ENCODE measurements at regions of chr15 and their contacts with region 1.

Region 1: GRCh38 chr15:74956648-74957300 is at the start of gene RPP25:
- DNase-seq: peak; percentile 93
- H3K4me3 Mint-ChIP-seq: peak within 1 kb of the TSS; percentile 74
- H3K27ac Mint-ChIP-seq: no peak within 1 kb of the TSS
- H3K4me1 Mint-ChIP-seq: peaks cover 32% of the 10 kb centered on the region
- H3K27me3 Mint-ChIP-seq: peaks cover 36% of the 10 kb centered on the region
- total RNA-seq, gene RPP25: 13.1 and 13.9 TPM in 2 replicates

Region 2: GRCh38 chr15:74787251-74788041 is 169.3 kb before region 1 on chr15:
- intact Hi-C with region 1: loop called (anchors 5 kb)
- DNase-seq: peak; percentile 97
- H3K4me3 Mint-ChIP-seq: peak overlapping the region; percentile 96
- H3K27ac Mint-ChIP-seq: peak overlapping the region; percentile 99
- H3K4me1 Mint-ChIP-seq: peaks cover 68% of the 10 kb centered on the region
- H3K27me3 Mint-ChIP-seq: no peaks in the 10 kb centered on the region

Region 3: GRCh38 chr15:74937596-74938296 is 19.0 kb before region 1 on chr15 and contains the start of gene COX5A:
- intact Hi-C with region 1: loop called (anchors 2 kb)
- DNase-seq: peak; percentile 97
- H3K4me3 Mint-ChIP-seq: peak within 1 kb of the TSS; percentile 92
- H3K27ac Mint-ChIP-seq: peak within 1 kb of the TSS; percentile 88
- H3K4me1 Mint-ChIP-seq: peaks cover 23% of the 10 kb centered on the region
- H3K27me3 Mint-ChIP-seq: no peaks in the 10 kb centered on the region
- total RNA-seq, gene COX5A: 314 and 317 TPM in 2 replicates

Region 4: DNA sequence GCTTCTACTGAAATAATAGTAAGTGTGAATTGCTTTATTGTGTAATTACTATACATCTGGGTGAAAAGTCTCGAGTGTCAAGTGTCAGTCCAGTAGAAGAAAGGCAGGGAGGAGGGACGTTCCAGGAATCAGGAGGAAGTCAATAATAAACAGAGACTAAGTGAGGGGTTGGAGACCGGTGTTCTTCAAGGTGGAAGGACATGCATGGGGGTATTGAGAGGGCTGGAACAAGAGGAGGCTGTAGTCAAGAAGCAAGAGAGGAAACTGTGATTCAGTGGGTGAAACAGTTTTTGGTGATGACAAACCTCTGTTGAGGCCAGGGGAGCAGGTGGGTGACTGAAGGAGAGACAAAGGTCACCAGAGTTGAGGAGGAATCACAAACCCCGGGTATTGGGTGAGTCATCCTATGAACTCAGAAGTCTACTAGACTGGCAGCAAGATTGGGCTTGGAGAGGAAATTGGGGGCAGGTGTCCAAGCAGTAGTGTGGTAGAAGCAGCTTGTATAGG is 27.0 kb after region 1 on chr15:
- intact Hi-C with region 1: loop called (anchors 1 kb)
- DNase-seq: peak; percentile 67
- H3K4me3 Mint-ChIP-seq: peak overlapping the region; percentile 5
- H3K27ac Mint-ChIP-seq: peak overlapping the region; percentile 67
- H3K4me1 Mint-ChIP-seq: peaks cover 7% of the 10 kb centered on the region
- H3K27me3 Mint-ChIP-seq: peaks cover 10% of the 10 kb centered on the region

Region 5: DNA sequence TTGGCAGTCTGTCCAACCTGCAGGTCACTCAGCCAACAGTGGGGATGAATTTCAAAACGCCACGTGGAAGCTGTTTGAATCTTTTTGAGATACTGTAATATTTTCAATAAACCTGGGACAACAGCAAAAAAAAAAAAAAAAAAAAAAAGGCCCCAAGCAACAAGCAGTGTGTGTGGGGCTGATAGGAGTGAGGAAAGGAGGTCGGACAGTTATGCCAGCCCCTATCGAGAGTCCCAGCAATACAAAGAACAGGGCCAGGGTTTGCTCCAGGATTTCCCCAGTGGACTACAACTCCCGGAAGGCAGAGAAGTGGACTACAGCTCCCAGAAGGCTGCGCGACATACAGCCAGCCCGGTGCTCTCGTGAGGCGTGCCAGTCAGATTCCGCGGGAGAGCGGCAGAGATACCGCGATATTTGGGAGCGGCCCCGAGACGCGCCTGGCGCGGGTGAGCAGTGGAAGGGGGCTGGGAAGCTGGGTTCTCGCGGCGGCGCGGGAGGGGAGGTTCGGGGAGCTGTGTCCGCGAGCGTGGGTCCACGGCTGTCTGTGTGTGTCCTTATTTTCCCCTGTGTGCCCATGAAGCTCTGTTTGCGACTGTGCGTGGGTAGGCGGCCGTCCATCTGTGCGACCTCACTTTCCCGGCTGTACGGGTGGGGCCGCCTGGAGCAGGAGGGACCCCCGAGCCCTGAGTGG is 66.6 kb after region 1 on chr15 and contains the start of gene PPCDC:
- intact Hi-C with region 1: loop called (anchors 1 kb)
- DNase-seq: peak; percentile 99
- H3K4me3 Mint-ChIP-seq: peak within 1 kb of the TSS; percentile 89
- H3K27ac Mint-ChIP-seq: peak within 1 kb of the TSS; percentile 93
- H3K4me1 Mint-ChIP-seq: peaks cover 18% of the 10 kb centered on the region
- H3K27me3 Mint-ChIP-seq: no peaks in the 10 kb centered on the region
- total RNA-seq, gene PPCDC: 21.4 and 24.5 TPM in 2 replicates